ENCODE measurements at regions of chr11 and their contacts with region 1.

Region 1: GRCh38 chr11:121372671-121373429 is 79.3 kb upstream of the SORL1 start:
- DNase-seq: peak; percentile 72
- ATAC-seq: peak; percentile 88
- H3K4me3 ChIP-seq: peak overlapping the region in 4 of 5 experiments; percentile 7 to 62 (median 40)
- H3K4me3 Mint-ChIP-seq: peak overlapping the region; percentile 81
- H3K27ac ChIP-seq: peak overlapping the region; percentile 39 to 63
- H3K27ac Mint-ChIP-seq: peak overlapping the region; percentile 79
- H3K4me1 ChIP-seq: peaks cover 25 to 27% of the 10 kb centered on the region in 2 donors
- H3K4me1 Mint-ChIP-seq: peaks cover 49% of the 10 kb centered on the region
- H3K27me3 ChIP-seq: no peaks in the 10 kb centered on the region
- H3K27me3 Mint-ChIP-seq: no peaks in the 10 kb centered on the region
- CTCF ChIP-seq: no peak

Region 2: DNA sequence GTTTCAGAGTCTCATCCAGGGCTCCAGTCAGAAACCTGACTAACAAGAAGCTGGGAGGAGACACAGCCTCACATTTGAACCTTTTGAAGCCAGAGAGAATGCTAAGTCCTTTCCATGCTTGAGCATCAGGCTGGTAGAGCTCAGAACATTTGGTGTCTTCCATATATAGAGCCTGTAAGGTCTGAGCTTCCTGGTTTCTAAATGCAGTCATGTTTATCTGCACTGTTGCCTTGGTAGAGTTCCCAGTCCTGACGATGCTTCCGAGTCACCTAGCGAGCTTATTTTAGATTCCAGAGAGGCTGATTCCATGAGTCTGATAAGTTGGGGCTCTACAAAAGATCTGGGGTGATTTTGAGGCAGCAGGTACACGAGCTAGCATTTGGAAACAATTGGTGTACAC is 10.9 kb after region 1 on chr11:
- CTCF ChIA-PET with region 1: interaction called, 13 read pairs
- POLR2A ChIA-PET with region 1: interaction called, 4 read pairs
- intact Hi-C with region 1: no loop called
- DNase-seq: no peak
- ATAC-seq: no peak
- H3K4me3 ChIP-seq: no peak overlapping the region
- H3K4me3 Mint-ChIP-seq: no peak overlapping the region
- H3K27ac ChIP-seq: no peak overlapping the region
- H3K27ac Mint-ChIP-seq: no peak overlapping the region
- H3K4me1 ChIP-seq: peaks cover 0 to 4% of the 10 kb centered on the region in 2 donors
- H3K4me1 Mint-ChIP-seq: peaks cover 1% of the 10 kb centered on the region
- H3K27me3 ChIP-seq: no peaks in the 10 kb centered on the region
- H3K27me3 Mint-ChIP-seq: no peaks in the 10 kb centered on the region
- CTCF ChIP-seq: no peak

Region 3: GRCh38 chr11:121406291-121406690 is 33.4 kb after region 1 on chr11:
- CTCF ChIA-PET with region 1: interaction called, 5 read pairs
- POLR2A ChIA-PET with region 1: no interaction called
- intact Hi-C with region 1: loop called (anchors 5 kb)
- DNase-seq: no peak
- ATAC-seq: no peak
- H3K4me3 ChIP-seq: no peak overlapping the region
- H3K4me3 Mint-ChIP-seq: no peak overlapping the region
- H3K27ac ChIP-seq: peak overlapping the region in 1 of 2 donors; percentile 44
- H3K27ac Mint-ChIP-seq: no peak overlapping the region
- H3K4me1 ChIP-seq: peaks cover 12 to 16% of the 10 kb centered on the region in 2 donors
- H3K4me1 Mint-ChIP-seq: peaks cover 25% of the 10 kb centered on the region
- H3K27me3 ChIP-seq: no peaks in the 10 kb centered on the region
- H3K27me3 Mint-ChIP-seq: no peaks in the 10 kb centered on the region
- CTCF ChIP-seq: no peak